Calu3 (cell line): ENCODE measurements at regions of chr18 and their contacts with region 1.

Region 1: GRCh38 chr18:29002747-29003565 is 826.0 kb upstream of the CDH2 start:
- DNase-seq: no peak
- H3K4me3 Mint-ChIP-seq: no peak overlapping the region
- H3K27ac Mint-ChIP-seq: no peak overlapping the region
- H3K4me1 Mint-ChIP-seq: no peaks in the 10 kb centered on the region
- H3K27me3 Mint-ChIP-seq: no peaks in the 10 kb centered on the region
- CTCF ChIP-seq: no peak

Region 2: GRCh38 chr18:29071869-29072268 is 68.9 kb after region 1 on chr18:
- CTCF ChIA-PET with region 1: no interaction called
- intact Hi-C with region 1: no loop called
- DNase-seq: no peak
- H3K4me3 Mint-ChIP-seq: no peak overlapping the region
- H3K27ac Mint-ChIP-seq: no peak overlapping the region
- H3K4me1 Mint-ChIP-seq: no peaks in the 10 kb centered on the region
- H3K27me3 Mint-ChIP-seq: no peaks in the 10 kb centered on the region
- CTCF ChIP-seq: no peak

Region 3: GRCh38 chr18:29361853-29362252 is 358.9 kb after region 1 on chr18:
- CTCF ChIA-PET with region 1: no interaction called
- intact Hi-C with region 1: loop called (anchors 10 kb)
- DNase-seq: no peak
- H3K4me3 Mint-ChIP-seq: no peak overlapping the region
- H3K27ac Mint-ChIP-seq: no peak overlapping the region
- H3K4me1 Mint-ChIP-seq: peaks cover under 1% of the 10 kb centered on the region
- H3K27me3 Mint-ChIP-seq: no peaks in the 10 kb centered on the region
- CTCF ChIP-seq: no peak